ENCODE measurements at regions of chr10 and their contacts with region 1.

Region 1: GRCh38 chr10:74826142-74827044 is at the start of gene KAT6B:
- DNase-seq: peak; percentile 100
- ATAC-seq: peak; percentile 73
- H3K4me3 ChIP-seq: peak within 1 kb of the TSS; percentile 74
- H3K27ac ChIP-seq: peak within 1 kb of the TSS; percentile 79
- H3K4me1 ChIP-seq: peaks cover 53% of the 10 kb centered on the region
- H3K27me3 ChIP-seq: no peaks in the 10 kb centered on the region
- CTCF ChIP-seq: peak; percentile 61
- total RNA-seq, gene KAT6B: 83.0 and 94.5 TPM in 2 replicates

Region 2: GRCh38 chr10:74176380-74177139 is 649.8 kb before region 1 on chr10:
- CTCF ChIA-PET with region 1: no interaction called
- POLR2A ChIA-PET with region 1: no interaction called
- intact Hi-C with region 1: loop called (anchors 2 kb)
- DNase-seq: peak; percentile 100
- ATAC-seq: peak; percentile 94
- H3K4me3 ChIP-seq: peak overlapping the region; percentile 69
- H3K27ac ChIP-seq: peak overlapping the region; percentile 76
- H3K4me1 ChIP-seq: peaks cover 40% of the 10 kb centered on the region
- H3K27me3 ChIP-seq: no peaks in the 10 kb centered on the region
- CTCF ChIP-seq: 0 out of 2 replicates have a peak, but pooled peaks have one; percentile 6

Region 3: GRCh38 chr10:74300666-74301065 is 525.7 kb before region 1 on chr10:
- CTCF ChIA-PET with region 1: no interaction called
- POLR2A ChIA-PET with region 1: interaction called, 16 read pairs
- intact Hi-C with region 1: loop called (anchors 2 kb)
- DNase-seq: no peak
- ATAC-seq: no peak
- H3K4me3 ChIP-seq: no peak overlapping the region
- H3K27ac ChIP-seq: no peak overlapping the region
- H3K4me1 ChIP-seq: no peaks in the 10 kb centered on the region
- H3K27me3 ChIP-seq: no peaks in the 10 kb centered on the region
- CTCF ChIP-seq: no peak

Region 4: DNA sequence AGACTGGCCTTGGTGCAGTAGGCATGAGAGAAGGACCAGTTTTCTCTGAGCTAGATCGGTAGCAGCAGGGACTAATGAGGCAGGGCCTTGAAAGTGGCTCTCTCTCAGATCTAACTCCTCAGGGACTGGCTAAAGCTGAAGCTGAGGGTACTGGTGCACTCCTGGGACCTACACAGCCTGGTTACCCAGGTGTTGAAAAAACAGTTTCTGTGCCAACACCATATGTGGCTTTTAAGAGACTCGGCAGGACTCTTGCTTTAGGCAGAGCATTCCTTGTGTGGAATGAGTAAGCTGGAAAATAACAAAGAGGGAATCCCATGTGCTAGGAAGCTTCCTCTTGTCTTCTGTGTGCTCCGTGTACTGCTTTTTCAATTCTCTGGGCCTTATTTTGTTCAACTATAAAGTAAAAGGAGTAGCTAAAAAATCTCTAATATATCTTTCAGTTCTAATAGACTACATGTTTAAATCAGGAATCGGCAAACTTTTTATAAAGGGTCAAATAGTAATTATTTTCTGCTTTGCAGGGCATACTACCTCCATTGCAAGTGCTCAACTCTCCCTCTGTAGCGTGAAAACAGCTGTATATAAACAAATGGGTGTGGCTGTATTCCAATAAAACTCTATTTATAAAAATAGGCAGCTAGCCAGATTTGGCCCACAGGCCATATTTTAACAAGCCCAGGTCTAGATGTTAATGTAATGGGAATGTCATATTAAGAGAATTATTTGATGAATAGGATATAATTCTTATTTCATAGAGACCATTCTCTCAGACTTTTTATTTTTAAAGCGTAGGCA is 186.1 kb before region 1 on chr10:
- CTCF ChIA-PET with region 1: no interaction called
- POLR2A ChIA-PET with region 1: interaction called, 3 read pairs
- intact Hi-C with region 1: loop called (anchors 2 kb)
- DNase-seq: peak; percentile 48
- ATAC-seq: no peak
- H3K4me3 ChIP-seq: no peak overlapping the region
- H3K27ac ChIP-seq: no peak overlapping the region
- H3K4me1 ChIP-seq: peaks cover 52% of the 10 kb centered on the region
- H3K27me3 ChIP-seq: no peaks in the 10 kb centered on the region
- CTCF ChIP-seq: no peak

Region 5: GRCh38 chr10:74669210-74669609 is 157.2 kb before region 1 on chr10:
- CTCF ChIA-PET with region 1: no interaction called
- POLR2A ChIA-PET with region 1: no interaction called
- intact Hi-C with region 1: no loop called
- DNase-seq: no peak
- ATAC-seq: no peak
- H3K4me3 ChIP-seq: no peak overlapping the region
- H3K27ac ChIP-seq: no peak overlapping the region
- H3K4me1 ChIP-seq: no peaks in the 10 kb centered on the region
- H3K27me3 ChIP-seq: no peaks in the 10 kb centered on the region
- CTCF ChIP-seq: no peak

Region 6: GRCh38 chr10:74753442-74754211 is 72.8 kb before region 1 on chr10:
- CTCF ChIA-PET with region 1: interaction called, 7 read pairs
- POLR2A ChIA-PET with region 1: interaction called, 19 read pairs
- intact Hi-C with region 1: loop called (anchors 1 kb)
- DNase-seq: peak; percentile 100
- ATAC-seq: peak; percentile 86
- H3K4me3 ChIP-seq: peak overlapping the region; percentile 30
- H3K27ac ChIP-seq: peak overlapping the region; percentile 82
- H3K4me1 ChIP-seq: peaks cover 25% of the 10 kb centered on the region
- H3K27me3 ChIP-seq: no peaks in the 10 kb centered on the region
- CTCF ChIP-seq: peak; percentile 51

Region 7: GRCh38 chr10:74988832-74989561 is 162.6 kb after region 1 on chr10:
- CTCF ChIA-PET with region 1: no interaction called
- POLR2A ChIA-PET with region 1: interaction called, 16 read pairs
- intact Hi-C with region 1: no loop called
- DNase-seq: no peak
- ATAC-seq: no peak
- H3K4me3 ChIP-seq: no peak overlapping the region
- H3K27ac ChIP-seq: no peak overlapping the region
- H3K4me1 ChIP-seq: peaks cover 5% of the 10 kb centered on the region; the same call in 1 of the 2 replicates
- H3K27me3 ChIP-seq: no peaks in the 10 kb centered on the region
- CTCF ChIP-seq: no peak

Region 8: DNA sequence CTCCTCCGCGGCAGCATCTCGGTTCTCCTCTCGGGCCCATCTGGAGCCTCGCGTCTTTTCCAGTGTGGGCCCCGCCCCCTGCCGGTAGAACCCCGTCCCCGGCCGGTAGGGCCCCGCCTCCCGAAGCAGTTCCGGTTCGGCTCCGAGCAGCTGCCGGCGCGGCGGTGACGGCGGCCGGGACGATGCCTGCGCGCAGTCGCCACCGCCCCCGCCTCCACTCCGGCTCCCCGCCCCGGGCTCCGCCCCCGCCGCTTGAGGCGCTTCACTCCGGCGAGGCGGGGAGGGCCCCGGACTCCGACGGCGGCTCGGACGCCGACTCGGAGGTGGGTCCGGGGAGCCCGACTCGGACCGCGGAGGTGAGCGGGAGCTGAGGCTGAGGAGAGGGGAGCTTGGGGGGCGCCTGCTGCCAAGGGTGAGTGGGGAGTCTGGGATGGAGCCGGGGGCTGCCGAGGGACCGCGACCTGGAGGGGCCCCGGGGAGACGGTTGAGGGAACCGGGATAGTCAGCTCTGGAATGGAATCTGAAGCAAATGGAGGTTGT is 285.0 kb after region 1 on chr10 and contains the start of gene SAMD8:
- CTCF ChIA-PET with region 1: no interaction called
- POLR2A ChIA-PET with region 1: interaction called, 6 read pairs
- intact Hi-C with region 1: loop called (anchors 1 kb)
- DNase-seq: peak; percentile 100
- ATAC-seq: peak; percentile 84
- H3K4me3 ChIP-seq: peak within 1 kb of the TSS; percentile 74
- H3K27ac ChIP-seq: peak within 1 kb of the TSS; percentile 64
- H3K4me1 ChIP-seq: peaks cover 25% of the 10 kb centered on the region
- H3K27me3 ChIP-seq: no peaks in the 10 kb centered on the region
- CTCF ChIP-seq: peak; percentile 50
- total RNA-seq, gene SAMD8: 47.4 and 48.6 TPM in 2 replicates